Panc1 (cell line): ENCODE measurements at regions of chr2 and their contacts with region 1.

Region 1: DNA sequence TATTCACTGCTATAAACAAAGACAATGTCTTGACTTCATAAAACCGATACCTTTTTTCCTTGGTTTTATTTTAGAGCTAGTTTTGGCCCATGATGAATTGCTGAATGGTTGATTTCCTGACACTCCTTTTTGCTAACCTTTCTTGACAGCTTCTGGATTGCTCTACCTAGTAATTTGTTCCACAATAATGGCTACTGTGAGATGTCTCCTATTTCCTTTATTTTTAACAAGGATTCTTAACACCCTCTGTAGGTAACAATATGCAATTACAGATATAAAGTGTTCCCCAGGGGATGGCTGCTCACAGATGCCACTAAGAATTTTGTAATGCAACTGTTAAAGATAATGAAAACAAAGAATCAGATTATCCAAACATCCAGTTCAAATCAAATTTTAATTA is 100.8 kb upstream of the ATP5MC3 start:
- DNase-seq: peak; percentile 12
- ATAC-seq: peak; percentile 82
- H3K4me3 ChIP-seq: no peak overlapping the region
- H3K27ac ChIP-seq: no peak overlapping the region
- H3K4me1 ChIP-seq: no peaks in the 10 kb centered on the region
- H3K27me3 ChIP-seq: peaks cover 14% of the 10 kb centered on the region; the same call in 1 of the 2 replicates
- CTCF ChIP-seq: peak; percentile 61; the same call in 1 of the 2 replicates

Region 2: GRCh38 chr2:174846941-174847938 is 435.1 kb before region 1 on chr2:
- CTCF ChIA-PET with region 1: no interaction called
- POLR2A ChIA-PET with region 1: no interaction called
- in situ Hi-C with region 1: no loop called
- intact Hi-C with region 1: no loop called
- DNase-seq: no peak
- ATAC-seq: 0 out of 2 replicates have a peak, but pooled peaks have one; percentile 62
- H3K4me3 ChIP-seq: peak overlapping the region in 1 of 2 experiments; percentile 15; a peak in 1 of 4 replicates
- H3K27ac ChIP-seq: no peak overlapping the region
- H3K4me1 ChIP-seq: peaks cover 4% of the 10 kb centered on the region; the same call in 1 of the 2 replicates
- H3K27me3 ChIP-seq: no peaks in the 10 kb centered on the region
- CTCF ChIP-seq: no peak

Region 3: DNA sequence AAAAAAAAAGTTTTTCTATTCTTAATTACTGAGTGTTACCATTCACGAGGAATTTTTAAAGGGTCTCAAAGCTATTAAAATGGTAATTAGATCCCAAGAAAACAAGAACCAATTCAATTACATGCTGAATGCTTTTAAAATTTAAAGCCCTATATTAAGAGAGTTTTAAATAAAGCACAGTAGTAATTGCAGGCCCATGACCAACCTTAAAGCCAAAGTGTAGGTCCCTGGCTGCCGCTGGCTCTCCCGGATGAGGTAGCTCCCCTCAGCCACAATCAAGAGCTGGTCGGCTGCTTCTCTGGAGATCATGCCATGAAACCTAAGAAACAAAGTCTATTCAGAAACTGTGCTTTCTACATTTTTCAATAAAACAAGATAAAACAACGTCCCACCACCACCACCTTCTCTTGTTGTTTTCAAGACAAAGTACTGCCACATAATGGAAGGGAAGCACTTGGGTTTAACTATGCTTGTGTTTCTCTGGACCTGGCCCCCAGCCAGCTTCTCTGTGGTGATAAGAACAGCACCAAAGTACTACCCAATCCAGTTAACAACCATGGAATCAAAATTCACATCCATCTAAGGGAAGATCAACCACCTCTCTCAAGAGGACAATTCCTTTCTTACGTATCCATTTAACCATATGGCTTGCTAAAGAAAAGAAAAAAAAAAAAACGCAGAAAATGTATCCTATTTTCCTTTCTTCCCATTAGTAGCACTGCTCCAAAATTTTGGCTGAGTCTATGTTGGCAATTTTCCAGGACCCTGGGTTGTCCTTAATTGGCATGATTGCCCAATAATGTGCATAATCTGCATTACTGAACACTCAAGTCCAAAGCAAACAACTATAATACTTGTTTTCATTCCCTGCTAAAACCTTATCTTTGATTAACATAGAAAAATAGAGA is 367.2 kb before region 1 on chr2:
- CTCF ChIA-PET with region 1: no interaction called
- POLR2A ChIA-PET with region 1: no interaction called
- in situ Hi-C with region 1: no loop called
- intact Hi-C with region 1: no loop called
- DNase-seq: no peak
- ATAC-seq: no peak
- H3K4me3 ChIP-seq: no peak overlapping the region
- H3K27ac ChIP-seq: no peak overlapping the region
- H3K4me1 ChIP-seq: no peaks in the 10 kb centered on the region
- H3K27me3 ChIP-seq: no peaks in the 10 kb centered on the region
- CTCF ChIP-seq: no peak

Region 4: GRCh38 chr2:175030380-175031271 is 251.7 kb before region 1 on chr2:
- CTCF ChIA-PET with region 1: interaction called, 3 read pairs
- POLR2A ChIA-PET with region 1: no interaction called
- in situ Hi-C with region 1: no loop called
- intact Hi-C with region 1: loop called (anchors 10 kb)
- DNase-seq: peak; percentile 25
- ATAC-seq: peak; percentile 98
- H3K4me3 ChIP-seq: no peak overlapping the region
- H3K27ac ChIP-seq: no peak overlapping the region
- H3K4me1 ChIP-seq: no peaks in the 10 kb centered on the region
- H3K27me3 ChIP-seq: no peaks in the 10 kb centered on the region
- CTCF ChIP-seq: peak; percentile 77

Region 5: GRCh38 chr2:175181104-175181876 is 101.0 kb before region 1 on chr2 and contains the start of gene ATP5MC3:
- CTCF ChIA-PET with region 1: no interaction called
- POLR2A ChIA-PET with region 1: no interaction called
- in situ Hi-C with region 1: no loop called
- intact Hi-C with region 1: no loop called
- DNase-seq: no peak
- ATAC-seq: peak; percentile 96
- H3K4me3 ChIP-seq: peak within 1 kb of the TSS; percentile 75 to 91
- H3K27ac ChIP-seq: peak within 1 kb of the TSS; percentile 83
- H3K4me1 ChIP-seq: peaks cover 9% of the 10 kb centered on the region; the same call in 1 of the 2 replicates
- H3K27me3 ChIP-seq: no peaks in the 10 kb centered on the region
- CTCF ChIP-seq: 0 out of 2 replicates have a peak, but pooled peaks have one; percentile 8
- total RNA-seq, gene ATP5MC3: 287 TPM

Region 6: DNA sequence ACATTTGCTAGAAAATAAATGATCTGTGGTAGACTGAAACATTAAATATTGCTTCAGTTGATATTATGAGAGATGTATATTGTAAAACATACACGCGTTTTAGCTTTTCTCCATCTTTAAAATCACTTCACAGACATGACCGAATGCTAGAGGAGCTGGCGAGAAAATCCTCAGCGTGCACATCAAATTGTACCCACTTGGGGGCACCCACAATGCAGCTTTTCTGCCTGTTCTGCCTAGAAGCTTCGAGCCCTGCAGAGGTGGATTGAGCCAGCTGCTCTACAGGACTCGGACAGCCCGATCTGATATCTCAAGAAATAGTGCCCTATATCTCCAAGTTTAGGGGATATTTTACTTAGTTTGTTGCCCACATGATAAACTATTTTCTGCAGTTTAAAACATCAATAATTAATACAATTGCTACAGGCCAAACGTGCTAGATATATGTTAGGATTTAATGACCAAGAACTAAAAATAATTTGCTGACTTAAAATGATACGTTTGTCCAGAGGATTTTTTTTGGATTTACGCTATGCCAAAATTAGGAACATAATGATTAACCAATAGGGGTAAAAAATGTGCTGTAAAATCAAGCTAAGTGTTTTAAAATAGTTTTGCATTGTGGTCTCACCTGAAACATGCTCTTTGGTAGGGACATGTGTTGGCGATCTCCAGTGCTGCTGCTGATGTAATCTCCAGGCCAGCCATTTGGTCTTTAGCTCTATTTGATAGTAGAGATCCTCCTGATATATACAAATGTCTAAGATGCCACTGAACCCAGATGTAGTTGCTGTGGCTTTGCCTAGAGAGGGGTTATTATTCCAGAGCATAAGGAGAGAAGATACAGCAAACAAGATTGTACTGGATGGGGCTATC is 78.4 kb before region 1 on chr2:
- CTCF ChIA-PET with region 1: no interaction called
- POLR2A ChIA-PET with region 1: no interaction called
- in situ Hi-C with region 1: no loop called
- intact Hi-C with region 1: loop called (anchors 5 kb)
- DNase-seq: no peak
- ATAC-seq: peak; percentile 97
- H3K4me3 ChIP-seq: no peak overlapping the region
- H3K27ac ChIP-seq: no peak overlapping the region
- H3K4me1 ChIP-seq: no peaks in the 10 kb centered on the region
- H3K27me3 ChIP-seq: no peaks in the 10 kb centered on the region; the same call in 1 of the 2 replicates
- CTCF ChIP-seq: peak; percentile 81